Heart left ventricle (tissue), 16 donors: ENCODE measurements at regions of chrX and their contacts with region 1.

Region 1: GRCh38 chrX:101206471-101206870 is 13.1 kb upstream of the DRP2 start:
- DNase-seq: no peak
- ATAC-seq: no peak
- H3K4me3 ChIP-seq: no peak overlapping the region
- H3K27ac ChIP-seq: no peak overlapping the region
- H3K4me1 ChIP-seq: no peaks in the 10 kb centered on the region
- H3K27me3 ChIP-seq: peaks cover 0 to 16% (median 0%) of the 10 kb centered on the region in 9 donors
- CTCF ChIP-seq: peak in 8 of 12 donors; percentile 11 to 31 (median 20)
- POLR2A ChIP-seq: no peak

Region 2: GRCh38 chrX:100674705-100675104 is 531.8 kb before region 1 on chrX:
- intact Hi-C with region 1: loop called in 1 of 10 experiments (anchors 10 kb)
- DNase-seq: no peak
- ATAC-seq: no peak
- H3K4me3 ChIP-seq: no peak overlapping the region
- H3K27ac ChIP-seq: no peak overlapping the region
- H3K4me1 ChIP-seq: peaks cover 0 to 11% (median 0%) of the 10 kb centered on the region in 12 donors
- H3K27me3 ChIP-seq: peaks cover 0 to 43% (median 0%) of the 10 kb centered on the region in 9 donors
- CTCF ChIP-seq: no peak
- POLR2A ChIP-seq: no peak

Region 3: DNA sequence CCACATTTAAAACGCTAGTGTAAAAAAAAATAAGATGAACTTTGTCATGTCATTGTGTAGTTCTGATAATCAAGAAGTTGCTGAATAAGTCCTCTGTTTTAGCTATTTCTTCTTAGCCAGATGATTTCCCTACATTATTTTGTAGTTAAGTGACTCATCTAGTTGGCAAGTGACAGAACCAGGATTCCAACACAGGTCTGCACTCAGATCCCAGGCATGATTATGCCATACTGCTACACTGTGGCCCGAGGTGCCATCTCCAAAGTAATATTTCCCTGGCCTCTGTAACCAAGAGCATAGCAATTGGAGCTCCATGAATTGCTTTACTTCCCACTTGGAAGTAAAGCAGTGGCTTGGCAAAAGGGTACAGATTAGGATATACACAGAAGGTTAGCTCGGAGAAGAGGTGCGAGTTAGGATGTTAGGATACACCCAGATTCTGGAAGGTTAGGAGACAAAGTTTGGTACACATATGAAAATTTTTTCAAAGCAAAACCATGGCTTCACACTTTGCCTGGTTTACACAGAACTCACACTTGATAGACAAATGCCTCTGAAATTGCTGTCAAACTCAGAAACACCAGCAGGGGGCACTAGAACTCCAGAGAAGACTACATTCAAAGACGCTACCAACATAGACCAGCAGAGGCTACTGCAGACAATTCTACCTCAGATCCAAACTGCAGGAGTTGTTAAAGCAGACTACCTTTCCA is 521.0 kb before region 1 on chrX:
- intact Hi-C with region 1: loop called in 1 of 10 experiments (anchors 10 kb)
- DNase-seq: peak in 3 of 5 donors; percentile 31 to 48 (median 38)
- ATAC-seq: peak; percentile 55 to 86 (median 72)
- H3K4me3 ChIP-seq: no peak overlapping the region
- H3K27ac ChIP-seq: no peak overlapping the region
- H3K4me1 ChIP-seq: no peaks in the 10 kb centered on the region
- H3K27me3 ChIP-seq: peaks cover 0 to 25% (median 0%) of the 10 kb centered on the region in 9 donors
- CTCF ChIP-seq: peak; percentile 55 to 86 (median 70)
- POLR2A ChIP-seq: no peak

Region 4: GRCh38 chrX:100895365-100896075 is 311.0 kb before region 1 on chrX:
- intact Hi-C with region 1: loop called in 3 of 10 experiments (anchors 10 kb)
- DNase-seq: peak in 1 of 5 donors; percentile 5
- ATAC-seq: no peak
- H3K4me3 ChIP-seq: no peak overlapping the region
- H3K27ac ChIP-seq: no peak overlapping the region
- H3K4me1 ChIP-seq: no peaks in the 10 kb centered on the region
- H3K27me3 ChIP-seq: peaks cover 0 to 17% (median 0%) of the 10 kb centered on the region in 9 donors
- CTCF ChIP-seq: peak in 10 of 12 donors; percentile 12 to 39 (median 26)
- POLR2A ChIP-seq: no peak

Region 5: GRCh38 chrX:101078716-101079598 is 127.5 kb before region 1 on chrX and contains the start of gene TMEM35A:
- intact Hi-C with region 1: no loop called
- DNase-seq: no peak
- ATAC-seq: peak in 1 of 4 donors; percentile 46
- H3K4me3 ChIP-seq: peak within 1 kb of the TSS in 10 of 12 donors; percentile 12 to 51 (median 31)
- H3K27ac ChIP-seq: peak within 1 kb of the TSS in 1 of 12 donors; percentile 62
- H3K4me1 ChIP-seq: no peaks in the 10 kb centered on the region
- H3K27me3 ChIP-seq: peaks cover 0 to 31% (median 0%) of the 10 kb centered on the region in 9 donors
- CTCF ChIP-seq: no peak
- POLR2A ChIP-seq: no peak
- total RNA-seq, gene TMEM35A: 0.12 to 1.1 (median 0.14) TPM in 4 of 9 donors, not detected in the others